ENCODE measurements at regions of chr12 and their contacts with region 1.

Region 1: DNA sequence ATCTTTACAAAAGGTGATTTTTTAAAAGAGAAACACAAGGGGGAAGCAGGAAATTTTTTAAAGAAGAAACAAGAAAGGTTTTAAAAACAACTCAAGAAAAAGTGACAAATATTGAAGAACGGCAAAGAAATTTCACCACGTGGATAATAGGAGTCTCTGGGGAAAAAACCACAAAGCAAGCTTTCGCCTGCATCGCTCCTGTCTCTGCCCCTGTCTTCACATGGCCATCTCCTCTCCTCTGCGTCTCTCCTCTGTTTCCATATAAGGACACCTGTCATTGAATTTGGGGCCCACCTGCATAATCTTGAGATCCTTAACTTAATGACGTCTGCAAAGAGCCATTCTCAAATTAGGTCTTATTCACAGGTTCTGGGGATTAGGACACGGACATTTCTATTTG is 175.8 kb downstream of the ETV6 start:
- DNase-seq: no peak
- H3K4me3 ChIP-seq: no peak overlapping the region
- H3K27ac ChIP-seq: no peak overlapping the region
- H3K27me3 ChIP-seq: no peaks in the 10 kb centered on the region
- CTCF ChIP-seq: no peak

Region 2: GRCh38 chr12:11916771-11917170 is 91.5 kb after region 1 on chr12:
- CTCF ChIA-PET with region 1: no interaction called
- POLR2A ChIA-PET with region 1: no interaction called
- DNase-seq: no peak
- H3K4me3 ChIP-seq: no peak overlapping the region
- H3K27ac ChIP-seq: no peak overlapping the region
- H3K27me3 ChIP-seq: no peaks in the 10 kb centered on the region
- CTCF ChIP-seq: no peak

Region 3: GRCh38 chr12:12190087-12190809 is 365.0 kb after region 1 on chr12:
- CTCF ChIA-PET with region 1: interaction called, 13 read pairs
- POLR2A ChIA-PET with region 1: no interaction called
- DNase-seq: no peak
- H3K4me3 ChIP-seq: no peak overlapping the region
- H3K27ac ChIP-seq: no peak overlapping the region
- H3K27me3 ChIP-seq: no peaks in the 10 kb centered on the region
- CTCF ChIP-seq: no peak

Measured in AG04450 (cell line).